IMR-90 (cell line): ENCODE measurements at regions of chr7 and their contacts with region 1.

Region 1: DNA sequence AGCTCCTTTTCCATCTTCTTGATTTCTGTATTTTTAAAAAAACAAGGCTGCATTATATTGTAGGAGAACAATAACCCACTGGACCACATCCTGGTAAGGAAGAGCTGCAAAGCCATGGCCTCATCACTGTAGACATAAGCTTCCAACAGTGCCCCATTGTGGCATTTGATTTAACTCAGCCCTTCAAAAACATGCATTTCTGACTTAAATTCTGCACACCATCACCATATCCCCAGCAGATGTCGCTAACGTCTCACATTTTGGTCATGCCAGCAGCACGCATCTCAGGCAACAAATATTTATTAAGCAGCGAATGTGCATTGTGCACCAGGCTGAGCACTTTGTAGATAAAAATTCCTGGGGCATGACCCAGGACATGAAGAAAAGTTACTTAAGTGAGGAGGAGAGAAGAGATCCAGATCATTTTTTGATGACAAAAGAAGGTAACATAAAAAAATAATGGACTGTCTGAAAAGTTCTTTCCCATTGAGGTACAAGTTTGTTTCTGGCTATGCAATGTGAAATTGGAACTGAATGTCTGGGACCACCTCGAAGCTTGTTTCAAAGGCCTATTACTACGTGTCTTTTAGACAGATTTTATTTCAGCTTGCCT is 164.6 kb upstream of the CDCA7L start:
- DNase-seq: peak; percentile 81
- ATAC-seq: peak; percentile 93
- H3K4me3 ChIP-seq: no peak overlapping the region
- H3K27ac ChIP-seq: no peak overlapping the region
- H3K4me1 ChIP-seq: no peaks in the 10 kb centered on the region
- H3K27me3 ChIP-seq: peaks cover 4% of the 10 kb centered on the region
- CTCF ChIP-seq: peak; percentile 97
- POLR2A ChIP-seq: no peak
- RAD21 ChIP-seq: peak; percentile 98

Region 2: GRCh38 chr7:22295402-22296264 is 185.3 kb after region 1 on chr7:
- CTCF ChIA-PET with region 1: interaction called, 15 read pairs
- POLR2A ChIA-PET with region 1: no interaction called
- dilution Hi-C with region 1: no loop called
- in situ Hi-C with region 1: no loop called
- intact Hi-C with region 1: loop called (anchors 1 kb)
- DNase-seq: no peak
- ATAC-seq: 0 out of 2 replicates have a peak, but pooled peaks have one; percentile 24
- H3K4me3 ChIP-seq: no peak overlapping the region
- H3K27ac ChIP-seq: no peak overlapping the region
- H3K4me1 ChIP-seq: no peaks in the 10 kb centered on the region
- H3K27me3 ChIP-seq: peaks cover 2% of the 10 kb centered on the region
- CTCF ChIP-seq: 0 out of 2 replicates have a peak, but pooled peaks have one; percentile 2
- POLR2A ChIP-seq: no peak
- RAD21 ChIP-seq: no peak

Region 3: DNA sequence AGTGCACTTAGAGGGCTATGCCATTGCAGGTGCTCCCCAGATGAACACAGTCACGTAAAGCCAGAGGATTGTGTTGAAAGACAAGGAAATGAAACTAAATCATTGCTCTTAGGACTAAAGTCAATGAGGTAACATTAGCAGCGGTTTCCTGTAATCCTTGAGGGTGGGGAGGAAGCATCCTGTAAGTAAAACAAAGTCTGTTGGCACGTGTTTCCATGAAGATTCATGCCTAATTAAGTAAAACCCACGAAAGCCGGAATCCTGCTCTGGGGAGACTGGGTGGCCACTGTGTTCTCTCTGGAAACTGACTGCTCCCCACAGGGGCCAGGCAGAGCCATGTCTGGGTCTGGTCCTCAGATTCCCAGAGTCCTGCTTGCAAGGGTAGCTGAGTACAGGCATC is 371.4 kb after region 1 on chr7:
- CTCF ChIA-PET with region 1: interaction called, 10 read pairs
- POLR2A ChIA-PET with region 1: no interaction called
- dilution Hi-C with region 1: loop called (anchors 25 kb)
- in situ Hi-C with region 1: loop called (anchors 5 kb)
- intact Hi-C with region 1: no loop called
- DNase-seq: no peak
- ATAC-seq: no peak
- H3K4me3 ChIP-seq: no peak overlapping the region
- H3K27ac ChIP-seq: no peak overlapping the region
- H3K4me1 ChIP-seq: peaks cover 2% of the 10 kb centered on the region
- H3K27me3 ChIP-seq: no peaks in the 10 kb centered on the region
- CTCF ChIP-seq: no peak
- POLR2A ChIP-seq: no peak
- RAD21 ChIP-seq: no peak

Region 4: DNA sequence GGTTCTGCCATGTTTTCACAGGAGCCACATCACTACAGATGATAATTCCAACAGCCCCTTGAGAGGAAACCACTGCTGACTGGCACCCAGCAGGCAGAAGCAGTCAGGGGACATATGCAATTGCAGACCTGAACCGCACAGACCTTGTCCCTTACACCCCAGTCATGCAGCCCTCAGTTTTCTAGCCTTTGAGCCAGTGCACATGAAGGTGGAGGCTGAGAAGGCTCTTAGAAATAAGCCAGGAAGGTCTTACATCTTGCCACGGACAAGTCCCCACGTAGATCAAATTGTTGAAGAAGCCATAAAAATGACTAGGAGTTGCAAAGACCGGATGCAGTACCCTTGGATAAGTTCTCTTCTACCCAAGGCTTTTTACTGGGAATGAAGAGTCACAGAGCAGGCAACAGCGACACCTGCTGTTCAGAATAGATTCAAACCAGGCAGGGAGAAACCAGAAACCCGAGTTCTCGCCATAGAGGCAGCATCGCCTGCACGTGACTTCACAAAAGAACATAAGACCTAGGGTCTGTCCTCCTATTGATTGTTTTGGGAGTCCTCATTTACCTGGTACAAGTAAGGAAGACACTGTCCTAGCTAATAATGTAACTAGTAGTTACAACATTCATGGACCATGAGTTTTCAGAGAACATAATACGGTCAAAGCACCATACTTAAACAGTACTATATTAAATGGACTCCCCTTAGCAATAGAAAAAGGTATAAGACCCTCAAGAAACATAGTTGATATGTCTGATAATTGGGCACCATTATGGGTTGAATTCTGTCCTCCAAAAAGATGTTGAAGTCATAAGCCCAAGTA is 378.5 kb after region 1 on chr7:
- CTCF ChIA-PET with region 1: interaction called, 10 read pairs
- POLR2A ChIA-PET with region 1: no interaction called
- dilution Hi-C with region 1: loop called (anchors 25 kb)
- in situ Hi-C with region 1: loop called (anchors 5 kb)
- intact Hi-C with region 1: loop called (anchors 1 kb)
- DNase-seq: peak; percentile 73
- ATAC-seq: peak; percentile 94
- H3K4me3 ChIP-seq: no peak overlapping the region
- H3K27ac ChIP-seq: no peak overlapping the region
- H3K4me1 ChIP-seq: peaks cover 2% of the 10 kb centered on the region
- H3K27me3 ChIP-seq: no peaks in the 10 kb centered on the region
- CTCF ChIP-seq: peak; percentile 95
- POLR2A ChIP-seq: no peak
- RAD21 ChIP-seq: peak; percentile 95

Region 5: DNA sequence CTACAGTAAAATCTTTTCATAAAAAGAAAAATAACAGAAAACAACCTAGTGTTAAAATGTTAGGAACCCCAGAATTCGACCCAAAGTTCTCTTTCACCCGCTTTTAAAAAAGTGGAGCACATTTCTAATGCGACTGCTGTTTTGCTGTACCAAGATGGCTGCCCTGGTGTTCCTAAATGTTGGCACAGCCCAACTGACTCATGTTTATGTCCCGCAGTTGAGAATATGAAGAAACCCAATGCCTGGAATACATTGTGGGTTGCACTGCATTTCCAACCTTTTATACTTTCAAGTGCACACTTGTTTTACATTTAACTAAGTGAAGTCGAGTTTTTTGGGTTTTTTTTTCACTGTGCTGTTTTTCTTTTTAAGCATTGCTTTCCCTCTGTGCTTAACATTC is 388.7 kb after region 1 on chr7:
- CTCF ChIA-PET with region 1: interaction called, 6 read pairs
- POLR2A ChIA-PET with region 1: no interaction called
- dilution Hi-C with region 1: loop called (anchors 25 kb)
- in situ Hi-C with region 1: no loop called
- intact Hi-C with region 1: loop called (anchors 1 kb)
- DNase-seq: peak; percentile 21
- ATAC-seq: no peak
- H3K4me3 ChIP-seq: no peak overlapping the region
- H3K27ac ChIP-seq: no peak overlapping the region
- H3K4me1 ChIP-seq: 0 out of 2 replicates have a peak, but pooled peaks cover 2% of the 10 kb centered on the region
- H3K27me3 ChIP-seq: no peaks in the 10 kb centered on the region
- CTCF ChIP-seq: no peak
- POLR2A ChIP-seq: no peak
- RAD21 ChIP-seq: no peak